ENCODE measurements at regions of chr7 and their contacts with region 1.

Region 1: DNA sequence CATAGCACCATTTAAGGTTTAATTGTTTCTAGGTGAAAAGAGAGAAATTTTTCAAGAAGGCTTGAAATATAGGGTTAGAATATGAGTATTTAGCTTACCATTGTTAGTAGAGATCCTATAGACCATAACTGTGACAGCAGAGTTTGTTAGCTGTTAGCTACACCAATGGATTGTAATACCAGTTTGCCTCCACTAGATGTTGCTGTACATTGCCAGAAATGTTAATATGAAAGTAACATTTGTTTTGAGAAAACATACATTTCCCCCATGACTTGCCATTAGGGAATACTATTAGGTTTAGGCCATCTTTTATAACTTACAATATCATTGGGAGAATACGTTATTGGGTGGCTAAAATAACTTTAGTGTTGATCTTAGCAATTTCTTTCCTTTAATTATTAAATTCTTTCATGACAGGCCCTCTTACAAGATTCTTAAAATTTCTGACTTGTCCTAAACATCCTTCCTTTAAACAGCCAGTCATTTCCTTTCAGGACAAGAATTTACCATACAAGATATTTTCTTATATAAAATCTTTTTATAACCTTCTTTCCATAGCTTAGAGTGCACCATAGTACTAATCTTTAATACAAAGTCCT is 39.5 kb downstream of the ZNF117 start:
- DNase-seq: peak in 2 of 5 donors; percentile 67 to 76
- H3K4me3 ChIP-seq: no peak overlapping the region
- H3K27ac ChIP-seq: no peak overlapping the region
- H3K4me1 ChIP-seq: peaks cover 0 to 3% (median 0%) of the 10 kb centered on the region in 3 donors
- H3K27me3 ChIP-seq: peaks cover 3% of the 10 kb centered on the region
- CTCF ChIP-seq: peak; percentile 81

Region 2: GRCh38 chr7:64602518-64602917 is 348.8 kb before region 1 on chr7:
- intact Hi-C with region 1: no loop called
- DNase-seq: no peak
- H3K4me3 ChIP-seq: no peak overlapping the region
- H3K27ac ChIP-seq: no peak overlapping the region
- H3K4me1 ChIP-seq: no peaks in the 10 kb centered on the region
- H3K27me3 ChIP-seq: no peaks in the 10 kb centered on the region
- CTCF ChIP-seq: no peak

Region 3: DNA sequence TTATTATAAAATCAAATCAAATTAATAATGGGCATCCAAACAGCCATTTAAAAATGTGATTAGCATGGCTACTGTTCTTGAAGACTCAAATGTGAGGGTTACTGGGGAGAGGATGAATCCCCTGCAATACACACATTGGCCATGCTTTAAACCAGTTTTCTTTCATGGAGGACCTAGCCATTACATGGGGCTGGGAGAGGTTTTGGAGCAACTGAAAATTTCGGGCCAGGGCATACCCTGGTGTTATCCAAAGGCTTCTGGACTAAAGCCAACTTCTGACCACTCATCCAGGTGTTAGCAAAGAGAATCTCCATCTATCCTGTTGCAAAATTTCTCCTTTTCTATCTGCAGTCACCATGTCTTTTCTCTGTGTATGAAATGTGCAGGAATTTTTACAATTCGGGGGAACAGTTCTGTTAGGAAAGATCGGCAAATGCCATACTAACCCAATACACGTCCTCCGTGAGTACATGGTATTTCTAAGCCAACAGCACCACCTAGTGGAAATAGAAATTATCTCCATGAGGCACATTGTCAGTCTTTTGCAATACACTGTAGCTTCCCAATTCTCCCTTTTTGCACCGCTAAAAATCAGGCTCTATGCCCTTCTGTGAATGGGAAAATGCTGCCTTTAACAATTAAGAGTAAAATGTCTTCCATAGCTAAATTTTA is 332.4 kb before region 1 on chr7:
- intact Hi-C with region 1: no loop called
- DNase-seq: peak in 2 of 5 donors; percentile 23 to 28
- H3K4me3 ChIP-seq: no peak overlapping the region
- H3K27ac ChIP-seq: no peak overlapping the region
- H3K4me1 ChIP-seq: no peaks in the 10 kb centered on the region
- H3K27me3 ChIP-seq: no peaks in the 10 kb centered on the region
- CTCF ChIP-seq: peak; percentile 62

Region 4: GRCh38 chr7:64876792-64877713 is 74.3 kb before region 1 on chr7:
- intact Hi-C with region 1: no loop called
- DNase-seq: peak; percentile 83 to 91 (median 88)
- H3K4me3 ChIP-seq: peak overlapping the region; percentile 15 to 48 (median 17)
- H3K27ac ChIP-seq: no peak overlapping the region
- H3K4me1 ChIP-seq: no peaks in the 10 kb centered on the region
- H3K27me3 ChIP-seq: no peaks in the 10 kb centered on the region
- CTCF ChIP-seq: no peak

Region 5: DNA sequence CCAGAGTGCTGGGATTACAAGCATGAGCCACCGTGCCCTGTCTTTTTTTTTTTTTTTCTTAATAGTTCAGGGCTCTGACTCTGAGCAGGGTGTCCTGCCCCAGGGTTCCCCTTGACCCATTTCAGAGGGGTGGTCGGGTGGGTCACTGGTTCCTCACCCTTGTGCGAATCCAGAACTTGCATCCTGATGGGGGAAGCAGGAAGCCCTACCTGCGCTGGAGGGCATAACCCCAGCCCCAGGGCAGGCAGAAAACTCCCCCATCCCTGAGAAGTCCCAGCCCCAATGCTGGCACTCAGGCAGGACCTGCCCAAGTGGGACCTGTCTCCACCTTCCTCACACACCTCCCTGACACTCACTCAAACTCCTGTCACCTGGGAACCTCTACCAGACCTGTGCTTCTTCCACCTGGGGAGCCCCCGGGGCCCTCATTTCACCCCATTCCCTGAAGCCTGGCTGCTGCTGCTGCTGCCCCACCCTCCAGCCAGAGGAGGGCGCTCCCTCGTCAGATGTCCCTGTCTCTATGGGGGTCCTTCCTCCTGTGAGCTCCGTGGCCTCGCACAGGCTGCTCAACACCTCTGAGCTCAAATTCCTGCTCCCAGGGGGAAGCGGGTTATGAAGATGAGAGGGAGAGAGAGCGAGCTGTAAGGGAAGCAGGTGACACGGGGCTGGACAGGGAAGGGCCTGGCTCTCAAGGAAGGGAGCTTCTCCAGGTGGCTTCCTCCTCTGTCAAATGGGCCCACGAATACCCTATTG is 63.4 kb before region 1 on chr7:
- intact Hi-C with region 1: no loop called
- DNase-seq: peak; percentile 35 to 67 (median 58)
- H3K4me3 ChIP-seq: peak overlapping the region in 2 of 3 donors; percentile 25 to 62
- H3K27ac ChIP-seq: no peak overlapping the region
- H3K4me1 ChIP-seq: peaks cover 0 to 8% (median 0%) of the 10 kb centered on the region in 3 donors
- H3K27me3 ChIP-seq: peaks cover 2% of the 10 kb centered on the region
- CTCF ChIP-seq: peak; percentile 19

Region 6: GRCh38 chr7:65307651-65308299 is 356.4 kb after region 1 on chr7:
- intact Hi-C with region 1: loop called (anchors 5 kb)
- DNase-seq: peak in 4 of 5 donors; percentile 74 to 88 (median 80)
- H3K4me3 ChIP-seq: no peak overlapping the region
- H3K27ac ChIP-seq: no peak overlapping the region
- H3K4me1 ChIP-seq: no peaks in the 10 kb centered on the region
- H3K27me3 ChIP-seq: no peaks in the 10 kb centered on the region
- CTCF ChIP-seq: peak; percentile 85

Measured in kidney (tissue), 22 donors.